Dendritic cell treated with granulocyte-macrophage colony-stimulating factor and Interleukin-4, amounts not matched to agents 40 ng/mL and 50 ng/mL, for 4 days (primary cell): ENCODE measurements at regions of chr16 and their contacts with region 1.

Region 1: DNA sequence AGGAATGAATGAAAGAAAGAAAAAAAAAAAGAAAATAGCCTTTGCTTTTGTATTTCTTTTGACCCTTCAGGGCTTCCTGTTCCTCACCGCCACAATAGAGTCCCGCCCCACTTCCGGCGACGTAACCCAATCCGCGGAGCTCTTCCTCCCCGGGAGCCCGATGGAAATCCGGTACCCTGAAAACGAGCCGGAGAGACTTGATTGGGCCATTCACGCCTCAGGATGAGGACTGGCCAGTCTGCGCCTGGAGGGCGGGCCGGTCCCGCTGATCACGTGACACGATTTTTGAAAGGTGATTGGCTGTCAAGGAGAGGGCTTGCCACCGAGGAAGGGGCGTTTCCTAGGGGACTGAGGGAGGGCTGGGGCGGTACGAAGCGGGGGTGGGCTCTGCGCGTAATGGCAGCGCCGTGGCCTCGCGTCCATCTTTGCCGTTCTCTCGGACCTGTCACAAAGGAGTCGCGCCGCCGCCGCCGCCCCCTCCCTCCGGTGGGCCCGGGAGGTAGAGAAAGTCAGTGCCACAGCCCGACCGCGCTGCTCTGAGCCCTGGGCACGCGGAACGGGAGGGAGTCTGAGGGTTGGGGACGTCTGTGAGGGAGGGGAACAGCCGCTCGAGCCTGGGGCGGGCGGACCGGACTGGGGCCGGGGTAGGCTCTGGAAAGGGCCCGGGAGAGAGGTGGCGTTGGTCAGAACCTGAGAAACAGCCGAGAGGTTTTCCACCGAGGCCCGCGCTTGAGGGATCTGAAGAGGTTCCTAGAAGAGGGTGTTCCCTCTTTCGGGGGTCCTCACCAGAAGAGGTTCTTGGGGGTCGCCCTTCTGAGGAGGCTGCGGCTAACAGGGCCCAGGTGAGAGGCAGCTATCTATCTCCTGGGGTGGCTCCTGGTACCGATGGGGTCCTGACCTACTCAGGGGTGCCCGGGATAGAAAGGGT is at the starts of genes PSME3IP1 and RSPRY1:
- H3K4me3 Mint-ChIP-seq: peak within 1 kb of the TSS; percentile 93
- H3K27ac Mint-ChIP-seq: peak within 1 kb of the TSS; percentile 93
- H3K4me1 Mint-ChIP-seq: peaks cover 49% of the 10 kb centered on the region
- H3K27me3 Mint-ChIP-seq: no peaks in the 10 kb centered on the region

Region 2: DNA sequence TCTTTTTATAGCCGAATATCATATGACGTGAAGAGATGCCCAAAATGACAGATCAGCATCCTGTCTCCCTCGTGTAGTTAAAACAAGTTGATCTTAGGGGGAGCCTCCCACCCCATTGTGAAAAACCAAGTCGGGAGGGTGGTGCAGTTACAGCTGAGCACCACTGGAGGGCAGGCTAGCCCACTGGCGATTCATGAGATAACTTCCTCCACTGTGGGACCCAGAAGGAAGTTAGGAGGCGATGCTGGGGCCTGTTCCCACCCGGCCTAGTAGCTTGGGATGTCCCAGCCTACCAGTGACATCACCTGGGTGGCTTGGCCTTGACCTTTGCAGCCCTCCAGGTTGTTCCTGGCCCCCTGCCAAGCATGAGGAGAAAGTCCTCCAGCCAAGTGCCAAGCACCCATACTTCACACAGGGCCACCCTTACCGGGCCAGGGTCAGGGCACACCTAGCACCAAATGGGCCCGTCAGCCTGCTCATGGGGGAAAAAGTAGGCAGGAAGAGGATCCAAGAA is 101.9 kb before region 1 on chr16:
- intact Hi-C with region 1: loop called (anchors 5 kb)
- H3K4me3 Mint-ChIP-seq: no peak overlapping the region
- H3K27ac Mint-ChIP-seq: no peak overlapping the region
- H3K4me1 Mint-ChIP-seq: peaks cover 16% of the 10 kb centered on the region
- H3K27me3 Mint-ChIP-seq: no peaks in the 10 kb centered on the region

Region 3: GRCh38 chr16:57244767-57245471 is 58.7 kb after region 1 on chr16 and contains the start of gene ARL2BP:
- intact Hi-C with region 1: loop called (anchors 1 kb)
- H3K4me3 Mint-ChIP-seq: peak within 1 kb of the TSS; percentile 81
- H3K27ac Mint-ChIP-seq: peak within 1 kb of the TSS; percentile 91
- H3K4me1 Mint-ChIP-seq: peaks cover 36% of the 10 kb centered on the region
- H3K27me3 Mint-ChIP-seq: no peaks in the 10 kb centered on the region